ENCODE measurements at regions of chr22 and their contacts with region 1.

Region 1: GRCh38 chr22:19479357-19480172 is at the start of gene CDC45:
- DNase-seq: peak; percentile 98
- H3K4me3 Mint-ChIP-seq: peak within 1 kb of the TSS; percentile 96
- H3K27ac Mint-ChIP-seq: peak within 1 kb of the TSS; percentile 100
- H3K4me1 Mint-ChIP-seq: peaks cover 38% of the 10 kb centered on the region
- H3K27me3 Mint-ChIP-seq: no peaks in the 10 kb centered on the region
- CTCF ChIP-seq: no peak
- total RNA-seq, gene CDC45: 7.5 and 18.6 TPM in 2 replicates

Region 2: DNA sequence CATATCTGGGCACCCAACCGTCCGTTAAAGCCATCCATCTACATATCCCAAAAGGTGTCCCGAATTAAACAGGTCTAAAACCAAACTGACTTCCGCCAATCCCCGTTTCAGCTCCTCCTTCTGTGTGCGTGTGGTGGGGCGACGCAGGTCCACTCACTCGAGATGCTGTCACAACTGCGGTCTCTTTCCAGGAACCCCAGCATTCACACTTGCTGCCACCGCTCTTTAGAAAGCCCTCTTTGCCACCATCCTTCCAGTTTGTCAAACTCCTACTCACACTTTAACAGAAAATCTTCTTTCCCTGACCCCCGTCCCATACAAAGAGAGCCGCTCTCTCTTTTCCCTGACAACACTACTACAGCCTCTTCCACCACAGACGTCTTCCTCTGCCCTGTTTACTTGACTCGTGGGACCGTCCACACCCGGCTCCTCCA is 335.6 kb before region 1 on chr22:
- CTCF ChIA-PET with region 1: interaction called, 3 read pairs
- POLR2A ChIA-PET with region 1: interaction called, 8 read pairs
- intact Hi-C with region 1: loop called (anchors 1 kb)
- DNase-seq: no peak
- H3K4me3 Mint-ChIP-seq: peak overlapping the region; percentile 100
- H3K27ac Mint-ChIP-seq: peak overlapping the region; percentile 99
- H3K4me1 Mint-ChIP-seq: peaks cover 11% of the 10 kb centered on the region
- H3K27me3 Mint-ChIP-seq: no peaks in the 10 kb centered on the region
- CTCF ChIP-seq: no peak

Region 3: DNA sequence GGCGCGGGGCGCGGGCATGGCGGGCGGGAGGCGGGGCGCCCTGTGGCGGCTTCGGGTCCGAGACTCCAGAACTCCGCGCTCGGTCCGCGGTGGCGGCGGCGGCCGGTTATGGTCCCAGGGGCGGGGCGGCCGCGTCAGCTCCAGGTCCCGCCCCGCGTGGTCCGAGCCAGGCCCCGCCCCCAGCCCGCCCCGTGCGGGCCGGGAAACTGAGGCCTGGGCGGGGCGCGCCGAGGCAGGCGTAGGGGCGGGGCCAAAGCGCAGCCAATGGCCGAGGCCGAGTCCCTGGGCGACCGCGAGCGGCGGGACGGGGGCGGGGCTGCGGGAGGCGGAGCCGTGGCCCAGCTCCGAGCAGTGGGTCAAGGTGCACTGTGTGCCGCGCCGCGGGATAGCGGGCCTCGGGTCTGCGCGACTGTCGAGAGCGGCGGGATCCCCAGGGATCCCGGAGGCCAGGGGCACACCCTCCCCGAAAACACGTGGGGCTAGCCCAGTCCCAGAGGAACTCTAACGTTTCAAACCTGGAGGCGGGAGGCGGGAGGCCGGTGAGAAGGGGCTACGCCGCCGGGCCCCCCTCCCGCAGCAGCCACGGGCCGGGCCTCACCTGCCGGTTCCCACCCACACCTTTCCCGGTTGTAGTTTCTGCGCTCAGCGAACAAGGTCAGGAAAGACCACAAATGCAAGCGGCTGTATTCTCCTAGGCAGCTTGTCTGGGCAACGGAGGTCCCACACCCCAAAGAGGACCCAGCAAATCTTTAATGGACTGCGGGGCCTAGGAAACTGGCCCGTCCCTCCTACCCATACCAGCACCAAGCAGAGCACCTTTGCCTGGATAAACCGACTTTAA is 300.7 kb before region 1 on chr22 and contains the start of gene SLC25A1:
- CTCF ChIA-PET with region 1: no interaction called
- POLR2A ChIA-PET with region 1: interaction called, 10 read pairs
- intact Hi-C with region 1: no loop called
- DNase-seq: peak; percentile 90
- H3K4me3 Mint-ChIP-seq: peak within 1 kb of the TSS; percentile 75
- H3K27ac Mint-ChIP-seq: peak within 1 kb of the TSS; percentile 31
- H3K4me1 Mint-ChIP-seq: peaks cover 18% of the 10 kb centered on the region
- H3K27me3 Mint-ChIP-seq: no peaks in the 10 kb centered on the region
- CTCF ChIP-seq: no peak
- total RNA-seq, gene SLC25A1: 41.0 and 53.9 TPM in 2 replicates

Region 4: DNA sequence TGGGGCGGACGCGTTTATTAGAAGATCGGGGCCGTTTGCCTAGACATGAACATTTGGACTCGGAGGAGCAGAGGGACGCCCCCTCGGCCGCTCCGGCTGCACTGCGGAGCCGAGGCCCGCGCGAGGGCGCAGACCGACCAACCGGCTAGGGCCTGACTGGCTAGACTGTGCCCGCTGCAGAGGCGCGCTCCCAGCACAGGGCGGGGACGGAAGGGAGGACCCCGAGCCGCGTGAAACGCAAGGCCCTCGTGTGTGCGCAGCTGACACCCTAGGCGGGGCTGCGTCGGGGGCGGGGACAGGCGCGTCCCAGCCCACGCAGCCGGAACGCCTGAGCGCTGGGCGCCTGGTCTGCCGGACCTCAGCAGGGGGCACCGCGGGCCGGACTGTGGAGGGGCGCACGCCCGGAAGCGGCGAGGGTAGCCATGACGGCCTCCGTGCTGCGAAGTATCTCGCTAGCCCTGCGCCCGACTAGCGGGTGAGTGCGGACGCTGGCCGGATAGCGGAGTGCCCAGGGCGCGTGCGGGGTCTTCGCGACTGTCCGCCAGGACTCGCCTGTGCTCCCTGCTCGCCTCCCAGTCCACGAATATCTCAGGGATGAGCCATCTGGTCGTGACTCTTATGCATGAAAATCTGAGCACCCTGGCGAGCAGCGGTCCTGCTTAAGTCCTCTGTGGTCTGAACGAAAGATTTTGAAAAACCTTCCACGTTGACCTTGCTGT is 47.3 kb before region 1 on chr22 and contains the start of gene MRPL40:
- CTCF ChIA-PET with region 1: interaction called, 3 read pairs
- POLR2A ChIA-PET with region 1: interaction called, 59 read pairs
- intact Hi-C with region 1: no loop called
- DNase-seq: peak; percentile 94
- H3K4me3 Mint-ChIP-seq: peak within 1 kb of the TSS; percentile 86
- H3K27ac Mint-ChIP-seq: peak within 1 kb of the TSS; percentile 91
- H3K4me1 Mint-ChIP-seq: peaks cover 11% of the 10 kb centered on the region
- H3K27me3 Mint-ChIP-seq: no peaks in the 10 kb centered on the region
- CTCF ChIP-seq: no peak
- total RNA-seq, gene MRPL40: 51.9 and 66.7 TPM in 2 replicates

Region 5: GRCh38 chr22:19447388-19448075 is 32.0 kb before region 1 on chr22 and contains the start of gene C22orf39:
- CTCF ChIA-PET with region 1: no interaction called
- POLR2A ChIA-PET with region 1: interaction called, 42 read pairs
- intact Hi-C with region 1: no loop called
- DNase-seq: peak; percentile 93
- H3K4me3 Mint-ChIP-seq: peak within 1 kb of the TSS; percentile 73
- H3K27ac Mint-ChIP-seq: peak within 1 kb of the TSS; percentile 9
- H3K4me1 Mint-ChIP-seq: peaks cover 16% of the 10 kb centered on the region
- H3K27me3 Mint-ChIP-seq: no peaks in the 10 kb centered on the region
- CTCF ChIP-seq: no peak
- total RNA-seq, gene C22orf39: 19.1 and 22.2 TPM in 2 replicates

Region 6: DNA sequence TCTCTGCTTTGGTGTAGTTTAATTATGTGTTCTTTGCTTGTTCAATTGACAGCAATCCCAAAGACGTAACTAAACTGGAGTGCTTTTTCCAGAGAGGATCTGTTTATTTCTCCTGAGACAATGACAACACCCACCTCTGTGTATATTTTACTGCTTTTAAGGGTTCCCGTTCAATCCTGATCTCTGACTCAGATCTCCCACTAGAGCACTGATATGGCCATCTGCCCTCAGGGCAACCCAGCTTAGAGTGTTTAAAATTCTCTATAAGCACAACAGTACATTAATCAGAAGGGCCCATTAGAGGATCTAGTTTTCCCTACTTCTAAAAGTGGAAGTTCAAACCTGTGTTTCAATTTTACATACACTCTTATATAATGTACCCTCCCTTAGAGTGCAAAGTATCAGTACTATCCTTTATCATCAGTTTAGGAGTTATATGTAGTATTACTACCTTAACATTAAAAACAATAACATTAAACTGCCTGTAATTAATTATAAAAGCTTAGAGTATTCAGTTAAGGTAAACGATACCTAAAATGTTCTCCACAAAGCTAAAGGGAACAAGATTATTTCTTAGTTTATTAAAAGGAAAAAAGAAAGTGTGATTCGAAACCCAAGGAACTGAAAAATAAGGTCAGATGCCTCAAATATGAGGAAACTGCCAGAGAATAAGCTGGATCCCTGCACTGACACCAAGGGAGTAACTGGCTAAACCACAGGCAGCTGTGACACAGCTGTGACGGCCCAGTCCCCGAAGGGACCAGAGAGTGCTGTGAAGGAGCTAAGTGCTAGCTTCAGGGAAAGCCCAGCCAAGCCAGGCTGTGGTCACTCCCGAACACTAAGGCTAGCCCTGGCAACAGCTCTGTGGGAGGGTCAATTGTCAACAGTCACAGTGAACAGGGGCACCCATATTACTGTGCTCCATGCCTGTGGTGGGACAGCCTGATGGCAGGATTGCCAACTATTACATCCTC is 15.8 kb before region 1 on chr22:
- CTCF ChIA-PET with region 1: interaction called, 11 read pairs
- POLR2A ChIA-PET with region 1: interaction called, 10 read pairs
- intact Hi-C with region 1: no loop called
- DNase-seq: no peak
- H3K4me3 Mint-ChIP-seq: no peak overlapping the region
- H3K27ac Mint-ChIP-seq: no peak overlapping the region
- H3K4me1 Mint-ChIP-seq: no peaks in the 10 kb centered on the region
- H3K27me3 Mint-ChIP-seq: no peaks in the 10 kb centered on the region
- CTCF ChIP-seq: no peak

Measured in MCF 10A (cell line).